H1 (cell line): ENCODE measurements at regions of chr17 and their contacts with region 1.

Region 1: GRCh38 chr17:69084911-69085310 is 24.2 kb upstream of the ABCA9 start:
- DNase-seq: peak; percentile 70 to 73
- H3K4me3 ChIP-seq: no peak overlapping the region
- H3K27ac ChIP-seq: no peak overlapping the region
- H3K4me1 ChIP-seq: no peaks in the 10 kb centered on the region
- H3K27me3 ChIP-seq: no peaks in the 10 kb centered on the region
- CTCF ChIP-seq: peak; percentile 61 to 77 (median 72)
- EP300 ChIP-seq: no peak
- POLR2A ChIP-seq: no peak
- RAD21 ChIP-seq: peak; percentile 44 to 53

Region 2: DNA sequence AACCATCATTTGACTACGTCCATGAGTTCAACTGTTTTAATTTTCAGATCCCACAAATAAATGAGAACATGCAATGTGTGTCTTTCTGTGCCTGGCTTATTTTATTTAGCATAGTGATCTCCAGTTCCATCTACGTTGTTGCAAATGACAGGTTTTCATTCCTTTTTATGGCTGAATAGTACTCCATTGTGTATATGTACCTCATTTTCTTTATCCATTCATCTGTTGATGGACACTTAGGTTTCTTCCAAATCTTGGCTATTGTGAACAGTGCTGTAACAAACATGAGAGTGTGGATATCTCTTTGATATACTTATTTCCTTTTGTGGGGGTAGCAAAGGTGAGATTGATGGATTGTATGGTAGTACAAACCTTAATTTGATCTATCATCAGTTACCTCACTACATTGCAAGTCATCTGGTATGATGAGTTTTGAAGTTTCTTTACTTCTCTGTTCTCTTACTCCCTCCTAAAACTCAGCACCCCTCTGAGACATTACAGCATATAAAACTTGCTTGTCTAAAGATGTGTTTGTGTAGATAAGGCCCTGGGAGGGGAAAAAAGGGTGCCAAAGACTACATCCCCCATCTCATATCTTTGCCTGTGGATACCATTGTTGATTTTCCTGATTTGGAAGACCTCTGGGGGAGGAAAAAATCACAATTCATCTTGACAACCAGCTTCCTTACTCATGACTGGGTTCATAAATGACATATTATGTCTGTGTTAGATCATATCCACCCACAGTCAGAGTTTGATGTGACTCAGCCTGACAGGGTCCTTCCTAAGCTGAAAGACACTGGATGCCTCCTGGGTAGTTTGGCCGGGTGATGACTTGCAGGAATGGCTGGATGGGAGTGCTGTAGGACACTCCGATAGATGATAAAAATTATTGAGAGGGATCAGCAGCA is 71.8 kb before region 1 on chr17:
- CTCF ChIA-PET with region 1: no interaction called
- POLR2A ChIA-PET with region 1: no interaction called
- DNase-seq: no peak
- H3K4me3 ChIP-seq: no peak overlapping the region
- H3K27ac ChIP-seq: no peak overlapping the region
- H3K4me1 ChIP-seq: no peaks in the 10 kb centered on the region
- H3K27me3 ChIP-seq: no peaks in the 10 kb centered on the region; a peak in 1 of 7 replicates
- CTCF ChIP-seq: no peak
- EP300 ChIP-seq: no peak
- POLR2A ChIP-seq: no peak
- RAD21 ChIP-seq: no peak

Region 3: DNA sequence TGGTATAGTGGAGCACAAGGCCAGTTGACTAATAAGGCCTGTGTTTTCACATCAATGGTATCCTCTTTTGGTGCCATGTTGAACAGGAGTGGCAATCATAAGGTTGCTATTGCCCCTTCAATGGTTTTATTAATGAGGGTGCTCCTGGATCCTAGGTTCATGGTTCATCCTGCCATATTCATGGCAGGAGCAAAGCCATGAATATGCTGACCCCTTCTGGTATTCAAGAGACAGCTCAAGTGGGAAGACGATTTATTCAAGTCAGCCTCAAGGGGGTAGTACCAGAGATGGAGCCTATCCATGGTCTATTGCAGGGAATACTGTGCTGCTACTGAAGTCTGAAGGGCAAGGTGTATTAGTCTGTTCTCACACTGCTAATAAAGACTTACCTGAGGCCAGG is 26.7 kb before region 1 on chr17:
- CTCF ChIA-PET with region 1: interaction called, 12 read pairs
- POLR2A ChIA-PET with region 1: interaction called, 4 read pairs
- DNase-seq: no peak
- H3K4me3 ChIP-seq: no peak overlapping the region
- H3K27ac ChIP-seq: no peak overlapping the region
- H3K4me1 ChIP-seq: no peaks in the 10 kb centered on the region; a peak in 1 of 7 replicates
- H3K27me3 ChIP-seq: no peaks in the 10 kb centered on the region
- CTCF ChIP-seq: peak in 2 of 3 experiments; percentile 76 to 98; a peak in 3 of 4 replicates
- EP300 ChIP-seq: no peak
- POLR2A ChIP-seq: no peak
- RAD21 ChIP-seq: peak; percentile 72 to 81

Region 4: GRCh38 chr17:69067274-69068047 is 17.4 kb before region 1 on chr17:
- CTCF ChIA-PET with region 1: interaction called, 18 read pairs
- POLR2A ChIA-PET with region 1: interaction called, 3 read pairs
- DNase-seq: no peak
- H3K4me3 ChIP-seq: no peak overlapping the region
- H3K27ac ChIP-seq: no peak overlapping the region
- H3K4me1 ChIP-seq: peaks cover 0 to 5% (median 0%) of the 10 kb centered on the region in 4 experiments; a peak in 2 of 7 replicates
- H3K27me3 ChIP-seq: no peaks in the 10 kb centered on the region
- CTCF ChIP-seq: peak in 1 of 3 experiments; percentile 17; a peak in 1 of 4 replicates
- EP300 ChIP-seq: no peak
- POLR2A ChIP-seq: no peak
- RAD21 ChIP-seq: no peak

Region 5: GRCh38 chr17:69098625-69099024 is 13.7 kb after region 1 on chr17:
- CTCF ChIA-PET with region 1: interaction called, 42 read pairs
- POLR2A ChIA-PET with region 1: no interaction called
- DNase-seq: no peak
- H3K4me3 ChIP-seq: no peak overlapping the region
- H3K27ac ChIP-seq: no peak overlapping the region
- H3K4me1 ChIP-seq: no peaks in the 10 kb centered on the region
- H3K27me3 ChIP-seq: no peaks in the 10 kb centered on the region
- CTCF ChIP-seq: no peak
- EP300 ChIP-seq: no peak
- POLR2A ChIP-seq: no peak
- RAD21 ChIP-seq: no peak

Region 6: GRCh38 chr17:69103557-69104233 is 18.8 kb after region 1 on chr17:
- CTCF ChIA-PET with region 1: interaction called, 42 read pairs
- POLR2A ChIA-PET with region 1: no interaction called
- DNase-seq: no peak
- H3K4me3 ChIP-seq: no peak overlapping the region
- H3K27ac ChIP-seq: no peak overlapping the region
- H3K4me1 ChIP-seq: no peaks in the 10 kb centered on the region
- H3K27me3 ChIP-seq: no peaks in the 10 kb centered on the region
- CTCF ChIP-seq: no peak
- EP300 ChIP-seq: no peak
- POLR2A ChIP-seq: no peak
- RAD21 ChIP-seq: no peak